Esophagus muscularis mucosa (tissue), 4 donors: ENCODE measurements at regions of chr13 and their contacts with region 1.

Region 1: DNA sequence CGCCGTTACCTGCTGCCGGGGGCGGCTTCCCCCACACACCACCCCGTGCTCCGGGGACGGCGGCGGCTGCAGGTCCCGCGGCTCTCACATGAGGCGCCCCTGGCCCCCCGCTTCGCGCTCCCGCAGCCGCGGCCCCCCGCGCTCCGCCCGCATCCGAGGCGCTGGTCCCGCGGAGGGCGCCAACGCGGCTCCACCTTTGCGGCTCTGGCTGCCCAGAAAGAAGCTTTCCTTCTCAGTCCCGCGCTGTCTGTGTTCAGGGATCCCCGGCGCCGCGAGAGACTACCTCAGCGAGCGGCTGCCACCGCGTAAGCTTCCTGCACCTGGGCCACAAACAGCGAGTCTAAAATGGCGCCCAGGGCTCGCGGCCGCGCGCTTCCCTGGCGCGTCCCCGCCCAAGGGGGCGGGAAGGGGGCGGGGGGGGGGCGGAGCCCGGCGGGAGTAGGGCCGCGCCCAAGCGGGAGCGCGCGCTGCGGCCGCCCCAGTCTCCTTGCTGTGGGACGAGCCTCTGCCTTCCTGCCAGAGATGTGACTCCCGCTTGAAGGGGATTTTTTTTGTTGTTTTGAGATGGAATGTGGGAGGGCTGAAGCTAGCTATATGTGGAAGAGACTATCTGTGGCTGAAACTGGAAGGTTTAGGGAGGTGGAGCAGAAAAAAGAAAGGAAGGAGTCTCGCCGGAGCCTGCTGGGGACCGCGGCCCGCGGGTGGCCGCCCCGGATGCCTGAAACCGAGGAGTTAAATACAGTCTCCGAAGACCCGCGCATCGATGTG is at the start of gene FBXL3:
- DNase-seq: peak; percentile 93
- H3K4me3 ChIP-seq: peak within 1 kb of the TSS; percentile 90 to 99 (median 97)
- H3K27ac ChIP-seq: peak within 1 kb of the TSS; percentile 96 to 100 (median 100)
- H3K4me1 ChIP-seq: peaks cover 44 to 50% (median 48%) of the 10 kb centered on the region in 4 donors
- H3K27me3 ChIP-seq: no peaks in the 10 kb centered on the region
- CTCF ChIP-seq: no peak
- EP300 ChIP-seq: no peak
- POLR2A ChIP-seq: peak; percentile 42
- total RNA-seq, gene FBXL3: 76.9 to 118 (median 80.5) TPM

Region 2: DNA sequence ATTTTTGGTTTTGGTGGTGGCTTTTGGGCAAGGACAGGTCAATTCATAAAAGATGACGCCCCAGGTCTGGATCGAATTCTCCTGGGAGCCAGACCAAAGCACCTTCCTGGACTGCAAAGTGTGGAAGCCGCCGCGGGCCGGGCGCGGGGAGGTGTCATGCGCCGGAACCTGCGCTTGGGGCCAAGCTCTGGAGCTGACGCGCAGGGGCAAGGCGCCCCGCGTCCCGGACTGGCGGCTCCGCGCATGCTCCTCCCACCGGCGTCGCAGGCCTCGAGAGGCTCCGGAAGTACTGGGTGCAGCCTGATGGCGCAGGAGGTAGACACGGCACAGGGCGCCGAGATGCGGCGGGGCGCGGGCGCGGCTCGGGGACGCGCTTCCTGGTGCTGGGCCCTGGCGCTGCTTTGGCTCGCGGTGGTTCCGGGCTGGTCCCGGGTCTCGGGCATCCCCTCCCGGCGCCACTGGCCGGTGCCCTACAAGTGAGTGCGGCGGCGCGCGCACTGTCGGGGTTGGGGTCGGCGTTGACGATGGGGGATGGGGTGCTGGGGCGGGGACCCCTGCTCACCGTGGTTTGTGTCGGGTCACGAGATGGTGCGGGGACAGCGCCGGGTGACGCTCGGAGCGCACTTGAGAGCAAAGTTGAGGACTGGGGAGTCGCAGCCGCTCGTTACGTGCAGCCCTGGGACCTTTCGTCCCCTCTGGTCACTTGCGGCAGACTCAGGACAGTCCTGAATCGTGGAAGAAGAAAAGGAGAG is 35.0 kb before region 1 on chr13 and contains the start of gene CLN5:
- intact Hi-C with region 1: loop called (anchors 5 kb)
- DNase-seq: peak; percentile 97
- H3K4me3 ChIP-seq: peak within 1 kb of the TSS; percentile 62 to 96 (median 94)
- H3K27ac ChIP-seq: peak within 1 kb of the TSS; percentile 88 to 98 (median 94)
- H3K4me1 ChIP-seq: peaks cover 14 to 29% (median 27%) of the 10 kb centered on the region in 4 donors
- H3K27me3 ChIP-seq: no peaks in the 10 kb centered on the region
- CTCF ChIP-seq: peak in 1 of 3 experiments; percentile 16
- EP300 ChIP-seq: no peak
- POLR2A ChIP-seq: peak; percentile 92
- total RNA-seq, gene CLN5: 17.6 to 26.2 (median 19.8) TPM

Region 3: DNA sequence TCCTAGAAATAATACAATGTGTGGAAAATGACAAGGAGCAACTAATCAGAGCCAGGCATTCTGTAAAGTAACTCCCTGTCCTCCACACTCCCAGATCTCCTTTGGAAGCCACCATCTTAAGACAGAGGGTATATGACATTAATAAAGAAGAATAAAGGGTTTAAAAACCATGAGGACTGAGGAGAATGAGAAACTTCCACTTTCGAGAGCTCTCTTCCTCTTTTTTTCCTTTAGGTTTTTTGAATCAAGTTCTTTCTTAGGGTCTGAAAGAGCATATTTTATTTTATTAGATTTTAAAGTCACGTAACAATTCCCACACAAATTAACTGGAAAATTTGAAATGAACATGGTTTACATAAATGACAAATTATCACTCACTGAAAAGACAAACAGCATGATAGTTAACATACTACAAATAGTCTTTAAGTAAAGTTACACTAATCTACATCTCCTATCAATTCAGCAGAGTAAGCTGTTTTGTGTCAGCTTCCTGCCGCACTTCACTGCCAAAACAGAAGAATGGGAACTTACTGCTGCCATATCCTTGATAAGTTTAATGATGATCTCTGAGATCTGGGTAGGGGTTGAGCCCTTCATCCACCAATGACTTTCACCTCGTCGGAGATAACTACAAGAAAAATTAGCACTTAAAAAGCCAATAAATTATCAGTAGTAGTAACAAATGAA is 38.6 kb after region 1 on chr13:
- intact Hi-C with region 1: no loop called
- DNase-seq: no peak
- H3K4me3 ChIP-seq: no peak overlapping the region
- H3K27ac ChIP-seq: no peak overlapping the region
- H3K4me1 ChIP-seq: no peaks in the 10 kb centered on the region
- H3K27me3 ChIP-seq: no peaks in the 10 kb centered on the region
- CTCF ChIP-seq: no peak
- EP300 ChIP-seq: no peak
- POLR2A ChIP-seq: no peak

Region 4: GRCh38 chr13:77084755-77085154 is 57.8 kb after region 1 on chr13:
- intact Hi-C with region 1: no loop called
- DNase-seq: no peak
- H3K4me3 ChIP-seq: no peak overlapping the region
- H3K27ac ChIP-seq: no peak overlapping the region
- H3K4me1 ChIP-seq: no peaks in the 10 kb centered on the region
- H3K27me3 ChIP-seq: no peaks in the 10 kb centered on the region
- CTCF ChIP-seq: no peak
- EP300 ChIP-seq: no peak
- POLR2A ChIP-seq: no peak